ENCODE measurements at regions of chr4 and their contacts with region 1.

Region 1: DNA sequence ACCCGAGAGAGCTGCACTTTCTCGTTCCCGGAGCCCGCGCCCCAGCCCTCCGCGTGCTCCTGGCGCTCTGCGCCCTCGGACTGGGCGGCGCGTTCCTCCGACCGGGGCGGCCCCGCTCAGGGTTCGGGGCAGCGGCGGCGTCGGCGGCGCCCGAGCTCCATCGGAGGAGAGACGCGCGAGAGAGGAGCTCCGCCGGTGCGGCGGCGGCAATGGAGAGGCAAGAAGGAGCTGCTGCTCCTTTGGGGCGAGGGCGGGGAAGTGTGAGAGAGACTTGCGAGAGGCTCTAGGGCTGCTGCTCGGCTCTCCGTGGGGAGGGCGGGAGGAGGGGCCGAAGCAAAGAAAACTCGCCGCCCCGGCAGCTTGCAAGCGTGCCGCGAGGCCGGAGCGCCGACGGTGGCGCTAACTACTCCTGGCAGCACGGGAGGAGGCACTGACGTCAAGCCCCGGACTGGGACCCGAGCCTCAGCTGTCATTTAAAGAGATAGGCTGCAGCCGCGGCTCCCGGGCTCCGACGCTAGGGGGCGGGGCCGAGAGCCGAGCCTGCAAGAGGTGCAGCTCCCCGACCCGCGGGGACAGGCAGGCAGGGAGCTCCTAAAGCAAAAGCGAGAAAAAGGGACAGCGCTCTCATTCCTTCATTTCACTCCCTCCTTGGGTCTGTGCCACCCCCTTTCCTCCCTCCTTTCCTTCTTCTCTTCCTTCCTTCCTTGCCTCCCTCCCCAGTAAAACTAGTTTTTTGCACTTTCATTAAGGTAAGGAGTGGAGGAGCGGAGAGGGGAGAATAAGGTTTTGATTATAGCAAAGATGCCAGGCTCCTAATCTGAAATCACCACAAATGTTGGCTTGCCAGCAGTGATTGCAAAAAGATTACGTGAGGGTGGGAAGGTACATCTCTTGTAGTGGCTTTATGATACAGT is at the start of gene KCTD8:
- DNase-seq: peak; percentile 90 to 98 (median 96)
- H3K4me3 ChIP-seq: peak within 1 kb of the TSS; percentile 58 to 85 (median 74)
- H3K27ac ChIP-seq: peak within 1 kb of the TSS; percentile 57 to 96 (median 89)
- H3K27me3 ChIP-seq: no peaks in the 10 kb centered on the region
- CTCF ChIP-seq: peak; percentile 69 to 94 (median 84)
- total RNA-seq, gene KCTD8: 6.8 to 20.6 (median 12.7) TPM

Region 2: DNA sequence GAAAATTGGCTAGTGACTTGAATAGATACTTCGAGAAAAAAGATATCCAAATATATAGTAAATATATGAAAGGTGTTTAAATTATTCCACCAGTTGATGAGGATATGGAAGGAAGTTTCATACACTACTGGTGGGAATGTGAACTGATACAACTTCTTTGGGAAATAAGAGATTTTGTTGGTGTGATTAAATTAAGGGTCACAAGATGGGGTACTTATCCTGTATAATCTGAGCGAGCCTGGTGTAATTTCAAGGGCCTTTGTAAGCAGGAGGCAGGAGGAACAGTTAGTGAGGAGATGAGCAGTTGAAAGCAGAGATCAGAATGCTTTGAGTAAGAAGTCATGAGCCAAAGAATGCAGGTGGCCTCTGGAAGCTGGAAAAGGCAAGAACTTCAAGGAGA is 192.4 kb before region 1 on chr4:
- intact Hi-C with region 1: loop called in 1 of 2 experiments (anchors 5 kb)
- DNase-seq: no peak
- H3K4me3 ChIP-seq: no peak overlapping the region
- H3K27ac ChIP-seq: peak overlapping the region in 18 of 59 donors; percentile 5 to 66 (median 28)
- H3K27me3 ChIP-seq: no peaks in the 10 kb centered on the region
- CTCF ChIP-seq: peak in 49 of 56 donors; percentile 13 to 65 (median 34)

Region 3: DNA sequence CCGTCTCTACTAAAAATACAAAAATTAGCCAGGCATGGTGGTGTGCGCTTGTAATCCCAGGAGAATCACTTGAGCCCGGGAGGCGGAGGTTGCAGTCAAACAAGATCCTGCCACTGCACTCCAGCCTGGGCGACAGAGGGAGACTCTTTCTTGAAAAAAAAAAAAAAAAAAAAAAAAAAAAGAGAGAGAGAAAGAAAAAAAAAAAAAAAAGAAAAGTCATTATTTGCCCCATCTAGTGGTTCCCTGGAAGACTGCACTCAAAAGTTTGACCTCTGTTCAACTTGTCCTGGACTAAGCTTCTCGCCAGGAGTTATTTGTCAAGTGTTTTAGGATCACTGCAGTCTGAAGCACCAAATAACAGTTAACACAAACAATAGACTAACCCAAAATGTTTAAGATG is 45.1 kb after region 1 on chr4:
- intact Hi-C with region 1: loop called in 1 of 2 experiments (anchors 2 kb)
- DNase-seq: no peak
- H3K4me3 ChIP-seq: no peak overlapping the region
- H3K27ac ChIP-seq: no peak overlapping the region
- H3K27me3 ChIP-seq: no peaks in the 10 kb centered on the region
- CTCF ChIP-seq: peak in 55 of 56 donors; percentile 27 to 64 (median 48)

Measured in dorsolateral prefrontal cortex (tissue), 120 donors.